GM12878 (cell line): ENCODE measurements at regions of chr16 and their contacts with region 1.

Region 1: GRCh38 chr16:11181899-11182279 is 74.1 kb downstream of the SOCS1 start:
- DNase-seq: peak; percentile 64
- ATAC-seq: peak; percentile 37
- H3K4me3 ChIP-seq: no peak overlapping the region
- H3K27ac ChIP-seq: peak overlapping the region; percentile 81
- H3K4me1 ChIP-seq: peaks cover 47% of the 10 kb centered on the region
- H3K27me3 ChIP-seq: no peaks in the 10 kb centered on the region
- CTCF ChIP-seq: no peak
- EP300 ChIP-seq: peak in 1 of 2 experiments; percentile 70; a peak in 1 of 4 replicates
- POLR2A ChIP-seq: peak; percentile 15; the same call in 1 of the 2 replicates
- RAD21 ChIP-seq: no peak

Region 2: GRCh38 chr16:10942233-10943063 is 239.4 kb before region 1 on chr16 and contains the start of gene DEXI:
- CTCF ChIA-PET with region 1: no interaction called
- POLR2A ChIA-PET with region 1: no interaction called
- RAD21 ChIA-PET with region 1: no interaction called
- SMC1A ChIA-PET with region 1: no interaction called
- in situ Hi-C with region 1: no loop called
- intact Hi-C with region 1: no loop called
- DNase-seq: peak; percentile 69
- ATAC-seq: peak; percentile 80
- H3K4me3 ChIP-seq: peak within 1 kb of the TSS; percentile 82
- H3K27ac ChIP-seq: peak within 1 kb of the TSS; percentile 72
- H3K4me1 ChIP-seq: peaks cover 32% of the 10 kb centered on the region
- H3K27me3 ChIP-seq: no peaks in the 10 kb centered on the region
- CTCF ChIP-seq: peak in 1 of 3 experiments; percentile 9; a peak in 1 of 6 replicates
- EP300 ChIP-seq: no peak
- POLR2A ChIP-seq: peak; percentile 79
- RAD21 ChIP-seq: no peak
- polyA plus RNA-seq, gene DEXI: 1.4 to 4.3 TPM

Region 3: GRCh38 chr16:10981697-10982216 is 200.1 kb before region 1 on chr16:
- CTCF ChIA-PET with region 1: no interaction called
- POLR2A ChIA-PET with region 1: no interaction called
- RAD21 ChIA-PET with region 1: interaction called, 6 read pairs
- SMC1A ChIA-PET with region 1: interaction called, 14 read pairs
- in situ Hi-C with region 1: no loop called
- intact Hi-C with region 1: loop called (anchors 5 kb)
- DNase-seq: no peak
- ATAC-seq: peak; percentile 94
- H3K4me3 ChIP-seq: no peak overlapping the region
- H3K27ac ChIP-seq: peak overlapping the region; percentile 55; the same call in 1 of the 2 replicates
- H3K4me1 ChIP-seq: peaks cover 20% of the 10 kb centered on the region
- H3K27me3 ChIP-seq: no peaks in the 10 kb centered on the region
- CTCF ChIP-seq: peak; percentile 78 to 85 (median 80)
- EP300 ChIP-seq: peak in 1 of 2 experiments; percentile 64; a peak in 1 of 4 replicates
- POLR2A ChIP-seq: no peak
- RAD21 ChIP-seq: peak; percentile 54

Region 4: DNA sequence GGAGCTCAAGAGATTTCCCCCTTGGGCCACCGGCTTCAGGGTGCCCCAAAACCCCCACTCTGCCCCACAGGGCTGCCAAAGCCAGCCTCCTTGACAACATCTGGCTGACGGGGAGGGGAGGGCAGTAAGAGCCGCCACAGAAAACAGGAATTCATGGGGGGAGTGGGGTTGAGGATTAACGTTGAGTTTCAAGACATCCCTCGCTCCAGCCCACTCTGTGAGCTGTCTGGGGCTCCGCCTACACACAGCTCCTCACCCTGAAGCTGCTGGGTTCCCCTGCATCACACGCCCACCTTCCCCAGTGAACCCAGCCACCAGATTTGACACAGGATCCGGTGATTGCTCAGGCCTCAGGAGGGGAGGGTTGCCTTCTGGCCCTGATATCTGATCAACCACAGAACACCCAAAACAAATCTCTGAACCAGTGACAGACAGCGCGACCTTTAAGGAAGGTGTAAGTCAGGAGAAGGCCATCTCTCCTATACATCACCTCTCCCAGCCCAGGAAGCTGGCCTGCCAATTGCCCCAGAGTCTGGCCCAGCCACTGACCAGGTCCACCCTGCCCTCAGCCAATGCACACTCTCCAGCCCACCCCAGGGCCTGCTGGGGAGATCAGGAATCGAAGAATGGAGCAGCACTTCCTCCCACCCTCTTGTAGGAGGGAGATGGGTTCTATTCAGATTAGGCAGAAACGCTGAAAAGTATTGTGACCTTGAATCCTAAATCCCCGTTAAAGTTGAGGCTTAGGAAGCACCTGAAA is 105.5 kb before region 1 on chr16:
- CTCF ChIA-PET with region 1: no interaction called
- POLR2A ChIA-PET with region 1: interaction called, 10 read pairs
- RAD21 ChIA-PET with region 1: interaction called, 13 read pairs
- SMC1A ChIA-PET with region 1: interaction called, 7 read pairs
- in situ Hi-C with region 1: no loop called
- intact Hi-C with region 1: loop called (anchors 5 kb)
- DNase-seq: peak; percentile 79
- ATAC-seq: peak; percentile 64
- H3K4me3 ChIP-seq: no peak overlapping the region
- H3K27ac ChIP-seq: peak overlapping the region; percentile 65
- H3K4me1 ChIP-seq: peaks cover 46% of the 10 kb centered on the region
- H3K27me3 ChIP-seq: no peaks in the 10 kb centered on the region
- CTCF ChIP-seq: no peak
- EP300 ChIP-seq: 0 out of 4 replicates have a peak, but pooled peaks of 1 of the 2 experiments have one; percentile 10
- POLR2A ChIP-seq: no peak
- RAD21 ChIP-seq: no peak

Region 5: GRCh38 chr16:11114366-11115164 is 67.3 kb before region 1 on chr16:
- CTCF ChIA-PET with region 1: no interaction called
- POLR2A ChIA-PET with region 1: interaction called, 8 read pairs
- RAD21 ChIA-PET with region 1: interaction called, 12 read pairs
- SMC1A ChIA-PET with region 1: interaction called, 12 read pairs
- in situ Hi-C with region 1: no loop called
- intact Hi-C with region 1: loop called (anchors 5 kb)
- DNase-seq: no peak
- ATAC-seq: no peak
- H3K4me3 ChIP-seq: no peak overlapping the region
- H3K27ac ChIP-seq: peak overlapping the region; percentile 52
- H3K4me1 ChIP-seq: peaks cover 39% of the 10 kb centered on the region
- H3K27me3 ChIP-seq: no peaks in the 10 kb centered on the region
- CTCF ChIP-seq: no peak
- EP300 ChIP-seq: no peak
- POLR2A ChIP-seq: no peak
- RAD21 ChIP-seq: no peak

Region 6: DNA sequence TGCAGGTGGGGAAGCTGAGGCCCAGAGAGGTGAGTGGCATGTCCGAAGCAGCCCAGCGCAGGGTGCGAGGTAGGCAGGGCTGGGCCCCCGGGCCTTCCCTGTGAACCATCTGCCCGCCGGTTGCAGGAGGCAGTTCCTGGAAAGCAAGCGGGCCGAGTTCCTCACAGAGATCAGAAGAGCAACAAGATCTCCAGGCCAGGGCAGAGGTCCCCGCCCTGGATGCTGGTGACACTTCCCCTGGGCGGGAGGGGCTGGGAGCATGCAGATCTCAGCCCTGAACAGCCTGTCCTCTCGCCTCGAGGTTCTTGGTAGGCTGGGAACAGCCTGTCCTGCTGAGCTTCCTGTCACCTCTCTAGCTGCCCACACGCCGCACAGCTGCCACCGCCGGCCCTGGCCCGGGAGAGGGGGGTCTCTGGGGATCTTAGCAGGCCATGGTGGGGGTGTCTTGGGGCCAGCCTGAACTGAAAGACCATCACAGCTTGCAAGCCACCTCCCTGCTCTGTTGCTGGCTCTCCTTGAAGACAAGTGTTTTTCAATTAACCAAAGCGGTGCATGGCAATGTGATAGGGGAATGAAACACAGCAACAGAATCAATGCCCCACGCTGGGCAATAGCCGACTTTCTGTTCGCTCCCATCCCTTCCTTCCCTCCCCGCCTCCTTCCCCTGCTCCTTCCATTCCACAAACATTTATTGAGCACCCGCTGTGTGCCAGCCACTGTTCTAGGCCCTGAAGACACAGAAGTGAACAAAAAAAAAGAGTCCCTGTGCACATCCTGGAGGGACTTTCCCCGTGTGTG is 42.4 kb after region 1 on chr16:
- CTCF ChIA-PET with region 1: interaction called, 11 read pairs
- POLR2A ChIA-PET with region 1: interaction called, 10 read pairs
- RAD21 ChIA-PET with region 1: interaction called, 35 read pairs
- SMC1A ChIA-PET with region 1: interaction called, 22 read pairs
- in situ Hi-C with region 1: no loop called
- intact Hi-C with region 1: loop called (anchors 2 kb)
- DNase-seq: peak; percentile 57
- ATAC-seq: peak; percentile 75
- H3K4me3 ChIP-seq: peak overlapping the region; percentile 19; the same call in 1 of the 2 replicates
- H3K27ac ChIP-seq: peak overlapping the region; percentile 94
- H3K4me1 ChIP-seq: peaks cover 28% of the 10 kb centered on the region
- H3K27me3 ChIP-seq: no peaks in the 10 kb centered on the region
- CTCF ChIP-seq: no peak
- EP300 ChIP-seq: no peak
- POLR2A ChIP-seq: peak; percentile 55
- RAD21 ChIP-seq: no peak